SK-N-SH (cell line): ENCODE measurements at regions of chr1 and their contacts with region 1.

Region 1: GRCh38 chr1:234114648-234115307 is 210.3 kb downstream of the SLC35F3 start:
- DNase-seq: peak; percentile 54
- H3K4me3 ChIP-seq: peak overlapping the region; percentile 7 to 44; a peak in 3 of 4 replicates
- H3K27ac ChIP-seq: no peak overlapping the region
- H3K4me1 ChIP-seq: peaks cover 0 to 5% of the 10 kb centered on the region in 2 experiments; a peak in 2 of 4 replicates
- H3K27me3 ChIP-seq: no peaks in the 10 kb centered on the region
- CTCF ChIP-seq: peak; percentile 84
- EP300 ChIP-seq: no peak
- RAD21 ChIP-seq: peak; percentile 87

Region 2: DNA sequence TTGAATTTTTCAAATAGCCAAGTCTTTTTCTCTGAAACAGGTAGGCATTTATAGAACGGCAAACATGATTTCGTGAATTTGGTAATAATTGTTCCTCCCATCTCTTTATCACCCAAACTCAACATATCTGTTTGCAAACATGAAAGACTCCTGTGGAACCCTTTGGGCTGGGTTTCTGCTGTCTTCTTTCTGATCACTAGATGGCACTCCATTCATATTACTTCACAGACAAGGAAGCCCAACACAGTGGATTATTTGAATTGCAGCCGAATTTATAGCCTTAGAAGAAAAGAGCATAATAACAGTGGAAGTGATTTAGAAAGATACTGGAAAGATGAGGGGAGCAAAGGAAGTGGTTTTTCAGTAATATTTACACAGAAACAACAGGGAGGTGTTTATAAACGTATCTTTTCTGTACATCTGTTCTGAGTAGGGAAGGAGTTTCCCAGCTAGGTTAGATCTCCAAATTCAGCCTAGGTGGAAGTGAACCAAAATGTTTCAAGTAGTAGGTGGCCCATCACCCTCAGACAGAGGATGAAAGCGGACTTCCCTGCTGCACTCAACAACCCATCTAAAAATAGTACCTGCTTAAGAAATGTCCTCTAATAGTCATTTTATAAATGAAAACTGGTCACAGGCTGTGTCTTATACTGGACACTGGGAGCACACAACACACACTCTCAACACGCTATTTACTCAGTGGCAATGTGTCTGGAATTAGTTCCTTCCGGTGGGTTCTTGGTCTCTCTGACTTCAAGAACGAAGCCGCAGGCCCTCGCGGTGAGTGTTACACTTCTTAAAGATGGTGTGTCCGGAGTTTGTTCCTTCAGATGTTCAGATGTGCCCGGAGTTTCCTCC is 719.7 kb before region 1 on chr1:
- CTCF ChIA-PET with region 1: interaction called, 21 read pairs
- POLR2A ChIA-PET with region 1: no interaction called
- DNase-seq: peak; percentile 52
- H3K4me3 ChIP-seq: no peak overlapping the region; a peak in 1 of 4 replicates
- H3K27ac ChIP-seq: no peak overlapping the region
- H3K4me1 ChIP-seq: peaks cover 0 to 5% of the 10 kb centered on the region in 2 experiments; a peak in 1 of 4 replicates
- H3K27me3 ChIP-seq: peaks cover 7% of the 10 kb centered on the region; the same call in 1 of the 2 replicates
- CTCF ChIP-seq: peak; percentile 91
- EP300 ChIP-seq: no peak
- RAD21 ChIP-seq: peak; percentile 97

Region 3: DNA sequence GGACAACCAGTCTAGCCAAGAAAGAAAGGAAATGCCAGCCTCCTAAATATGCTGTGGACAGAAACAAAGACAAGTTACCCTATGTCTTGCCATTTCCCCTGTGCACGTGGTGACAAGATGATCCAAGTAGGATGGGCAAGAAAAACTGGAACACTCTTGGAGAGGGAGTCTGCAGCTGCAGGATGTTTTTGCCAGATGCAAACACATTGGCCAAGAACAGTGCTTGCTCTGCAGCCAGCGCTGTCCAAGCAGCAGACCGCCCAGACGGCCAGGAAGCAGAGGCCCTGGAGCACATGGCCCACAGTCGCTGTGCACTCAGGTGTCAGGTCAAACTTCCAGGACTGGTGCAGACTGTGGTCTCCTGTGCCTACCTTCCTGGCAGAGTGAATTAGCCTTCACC is 21.0 kb before region 1 on chr1:
- CTCF ChIA-PET with region 1: interaction called, 18 read pairs
- POLR2A ChIA-PET with region 1: no interaction called
- DNase-seq: peak; percentile 39
- H3K4me3 ChIP-seq: no peak overlapping the region
- H3K27ac ChIP-seq: peak overlapping the region in 1 of 2 experiments; percentile 5; a peak in 2 of 4 replicates
- H3K4me1 ChIP-seq: peaks cover 0 to 12% of the 10 kb centered on the region in 2 experiments; a peak in 1 of 4 replicates
- H3K27me3 ChIP-seq: no peaks in the 10 kb centered on the region; the same call in 1 of the 2 replicates
- CTCF ChIP-seq: no peak
- EP300 ChIP-seq: no peak
- RAD21 ChIP-seq: no peak

Region 4: DNA sequence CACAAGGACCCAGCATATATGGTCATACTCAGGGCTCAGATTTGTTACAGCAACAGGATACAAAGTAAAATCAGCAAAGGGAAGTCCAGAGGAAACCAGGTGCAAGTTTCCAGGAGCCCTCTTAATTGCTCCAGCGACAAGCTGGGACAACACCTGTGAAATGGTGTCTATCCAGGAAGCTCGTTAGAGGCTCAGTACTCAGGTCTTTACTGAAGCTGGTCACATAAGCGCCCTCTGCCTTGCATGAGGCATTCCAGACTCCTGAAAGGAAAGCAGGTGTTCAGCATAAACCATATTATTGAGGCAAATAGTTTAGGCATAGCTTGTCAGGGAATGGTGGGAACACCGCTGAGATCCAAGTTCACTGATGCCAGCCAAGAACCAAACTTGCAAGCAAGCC is 20.7 kb after region 1 on chr1:
- CTCF ChIA-PET with region 1: interaction called, 12 read pairs
- POLR2A ChIA-PET with region 1: no interaction called
- DNase-seq: no peak
- H3K4me3 ChIP-seq: no peak overlapping the region
- H3K27ac ChIP-seq: no peak overlapping the region
- H3K4me1 ChIP-seq: peaks cover 0 to 4% of the 10 kb centered on the region in 2 experiments; a peak in 2 of 4 replicates
- H3K27me3 ChIP-seq: no peaks in the 10 kb centered on the region
- CTCF ChIP-seq: no peak
- EP300 ChIP-seq: no peak
- RAD21 ChIP-seq: no peak